ENCODE measurements at regions of chr3 and their contacts with region 1.

Region 1: GRCh38 chr3:112642912-112643506 is 2.1 kb upstream of the CCDC80 start:
- DNase-seq: peak; percentile 89
- H3K4me3 Mint-ChIP-seq: no peak overlapping the region
- H3K27ac Mint-ChIP-seq: no peak overlapping the region
- H3K4me1 Mint-ChIP-seq: peaks cover 19% of the 10 kb centered on the region
- H3K27me3 Mint-ChIP-seq: peaks cover 9% of the 10 kb centered on the region

Region 2: GRCh38 chr3:112676659-112677234 is 33.7 kb after region 1 on chr3:
- CTCF ChIA-PET with region 1: interaction called, 17 read pairs
- DNase-seq: peak; percentile 90
- H3K4me3 Mint-ChIP-seq: peak overlapping the region; percentile 11
- H3K27ac Mint-ChIP-seq: peak overlapping the region; percentile 81
- H3K4me1 Mint-ChIP-seq: peaks cover 65% of the 10 kb centered on the region
- H3K27me3 Mint-ChIP-seq: peaks cover 4% of the 10 kb centered on the region

Region 3: DNA sequence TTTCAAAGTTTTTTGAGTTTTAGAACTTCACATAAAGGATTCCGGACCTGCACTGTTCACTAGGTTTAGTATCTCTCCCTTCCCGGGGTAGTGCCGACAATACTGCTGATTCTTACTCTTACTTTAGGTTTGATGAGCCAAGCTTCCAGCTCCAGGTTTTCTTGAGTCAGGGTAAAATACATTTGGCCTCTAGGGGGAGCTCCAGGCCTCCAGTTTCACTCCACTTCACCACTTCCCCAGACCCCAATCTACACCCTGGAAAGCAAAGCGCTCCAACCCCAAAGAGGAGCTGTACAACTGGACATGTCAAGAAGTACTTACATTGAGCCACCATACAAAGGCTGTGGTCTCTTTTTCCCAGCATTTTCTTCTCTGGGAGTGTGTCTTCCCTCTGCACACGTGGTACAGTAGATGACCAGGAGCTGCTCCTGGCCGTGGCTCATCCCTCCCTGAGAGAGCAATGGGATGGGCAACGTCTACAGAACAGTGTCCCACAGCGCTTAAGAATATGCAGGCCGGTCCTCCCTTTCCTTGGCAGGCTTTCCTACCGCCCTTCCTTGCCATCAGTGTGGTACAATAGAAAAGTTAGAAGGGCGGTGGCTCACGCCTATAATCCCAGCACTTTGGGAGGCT is 91.8 kb after region 1 on chr3:
- CTCF ChIA-PET with region 1: interaction called, 64 read pairs
- DNase-seq: peak; percentile 73
- H3K4me3 Mint-ChIP-seq: no peak overlapping the region
- H3K27ac Mint-ChIP-seq: no peak overlapping the region
- H3K4me1 Mint-ChIP-seq: peaks cover 42% of the 10 kb centered on the region
- H3K27me3 Mint-ChIP-seq: no peaks in the 10 kb centered on the region

Region 4: GRCh38 chr3:112773864-112774590 is 131.0 kb after region 1 on chr3:
- CTCF ChIA-PET with region 1: no interaction called
- DNase-seq: no peak
- H3K4me3 Mint-ChIP-seq: no peak overlapping the region
- H3K27ac Mint-ChIP-seq: peak overlapping the region; percentile 35
- H3K4me1 Mint-ChIP-seq: peaks cover 18% of the 10 kb centered on the region
- H3K27me3 Mint-ChIP-seq: peaks cover 13% of the 10 kb centered on the region

Region 5: DNA sequence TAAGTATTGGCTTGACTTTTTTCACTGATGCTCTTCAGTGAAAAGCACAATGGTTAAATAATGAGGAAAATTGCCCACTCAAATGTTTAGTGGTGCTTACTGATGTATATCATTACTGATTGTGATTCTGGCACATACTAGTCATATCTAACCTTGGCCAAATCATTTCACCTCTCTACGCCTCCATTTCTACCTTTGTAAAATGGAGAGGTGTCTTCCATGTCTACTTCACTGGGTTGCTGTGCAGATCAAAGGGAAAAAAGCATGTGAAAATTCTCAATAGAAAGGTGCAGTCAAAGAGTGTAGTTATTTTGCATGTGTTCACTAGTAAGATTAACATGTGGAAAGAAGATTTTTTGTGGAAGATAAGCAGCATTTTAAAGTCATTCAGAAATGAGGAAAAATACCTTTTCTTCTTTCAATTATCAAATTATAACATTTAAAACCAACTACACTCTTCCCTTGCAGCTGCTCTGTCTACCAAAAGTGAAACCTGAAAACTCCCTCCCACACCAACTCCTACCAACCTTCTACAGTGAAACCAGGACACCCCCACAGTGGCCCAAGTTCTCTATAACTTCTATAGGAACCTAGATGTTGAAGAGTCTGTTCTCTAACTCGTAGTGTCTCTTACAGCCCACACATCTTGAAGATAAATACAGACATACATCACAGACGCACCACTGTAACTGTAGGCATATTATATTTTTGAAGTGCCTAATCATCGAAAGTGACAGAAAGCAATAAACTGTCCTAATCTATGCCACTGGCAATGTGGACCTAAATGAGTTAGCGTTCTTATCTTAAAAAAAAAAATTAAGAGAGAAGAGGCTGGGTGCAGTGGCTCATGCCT is 330.5 kb after region 1 on chr3:
- CTCF ChIA-PET with region 1: interaction called, 48 read pairs
- DNase-seq: peak; percentile 62
- H3K4me3 Mint-ChIP-seq: peak overlapping the region; percentile 88
- H3K27ac Mint-ChIP-seq: peak overlapping the region; percentile 88
- H3K4me1 Mint-ChIP-seq: peaks cover 67% of the 10 kb centered on the region
- H3K27me3 Mint-ChIP-seq: no peaks in the 10 kb centered on the region

Region 6: GRCh38 chr3:113035387-113035982 is 392.5 kb after region 1 on chr3:
- CTCF ChIA-PET with region 1: interaction called, 15 read pairs
- DNase-seq: peak; percentile 46
- H3K4me3 Mint-ChIP-seq: no peak overlapping the region
- H3K27ac Mint-ChIP-seq: peak overlapping the region; percentile 42
- H3K4me1 Mint-ChIP-seq: no peaks in the 10 kb centered on the region
- H3K27me3 Mint-ChIP-seq: no peaks in the 10 kb centered on the region